ENCODE measurements at regions of chr10 and their contacts with region 1.

Region 1: DNA sequence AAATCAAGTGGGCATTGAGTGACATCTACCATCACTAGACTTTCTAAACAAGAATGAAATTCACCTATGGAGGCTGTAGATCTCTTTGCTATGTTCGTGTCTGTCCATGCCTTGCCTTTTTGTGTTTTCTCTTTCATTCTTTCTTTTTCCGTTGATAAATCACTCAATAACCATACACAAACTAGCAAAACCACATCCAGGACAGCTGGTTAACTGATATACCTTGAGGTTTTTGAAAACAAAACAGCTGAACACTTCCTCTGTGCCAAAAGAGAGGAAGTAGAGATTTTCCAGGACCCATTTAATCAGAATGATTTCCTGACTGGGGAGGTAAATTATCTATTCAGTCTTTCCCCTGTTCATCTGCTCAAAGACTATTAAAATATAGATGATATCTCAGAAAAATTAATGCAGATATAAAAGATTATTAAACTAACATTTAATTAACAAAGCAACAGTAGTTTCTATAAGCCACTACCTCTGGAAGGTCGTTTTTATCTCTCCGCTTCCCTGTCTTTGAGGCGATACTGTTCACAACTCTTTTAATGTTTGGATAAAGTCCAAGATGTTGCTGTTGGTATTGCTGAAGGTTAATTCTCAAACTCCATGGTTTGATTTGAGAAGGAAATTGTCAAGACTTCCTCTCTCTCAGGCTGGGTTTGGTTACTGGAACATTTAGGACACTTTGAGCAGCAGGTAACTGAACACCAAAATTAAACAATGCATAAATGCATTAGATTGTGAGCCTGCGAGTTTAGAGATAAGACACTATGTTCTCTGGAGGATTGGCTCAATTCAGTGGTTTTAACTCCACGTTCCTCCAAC is 24.4 kb upstream of the C10orf67 start:
- DNase-seq: peak; percentile 68
- ATAC-seq: peak; percentile 73
- H3K4me3 ChIP-seq: peak overlapping the region; percentile 26; the same call in 1 of the 2 replicates
- H3K27ac ChIP-seq: no peak overlapping the region
- H3K4me1 ChIP-seq: peaks cover 23% of the 10 kb centered on the region
- H3K27me3 ChIP-seq: no peaks in the 10 kb centered on the region
- CTCF ChIP-seq: no peak
- EP300 ChIP-seq: peak; percentile 48 to 53; a peak in 2 of 4 replicates
- POLR2A ChIP-seq: no peak
- RAD21 ChIP-seq: no peak

Region 2: DNA sequence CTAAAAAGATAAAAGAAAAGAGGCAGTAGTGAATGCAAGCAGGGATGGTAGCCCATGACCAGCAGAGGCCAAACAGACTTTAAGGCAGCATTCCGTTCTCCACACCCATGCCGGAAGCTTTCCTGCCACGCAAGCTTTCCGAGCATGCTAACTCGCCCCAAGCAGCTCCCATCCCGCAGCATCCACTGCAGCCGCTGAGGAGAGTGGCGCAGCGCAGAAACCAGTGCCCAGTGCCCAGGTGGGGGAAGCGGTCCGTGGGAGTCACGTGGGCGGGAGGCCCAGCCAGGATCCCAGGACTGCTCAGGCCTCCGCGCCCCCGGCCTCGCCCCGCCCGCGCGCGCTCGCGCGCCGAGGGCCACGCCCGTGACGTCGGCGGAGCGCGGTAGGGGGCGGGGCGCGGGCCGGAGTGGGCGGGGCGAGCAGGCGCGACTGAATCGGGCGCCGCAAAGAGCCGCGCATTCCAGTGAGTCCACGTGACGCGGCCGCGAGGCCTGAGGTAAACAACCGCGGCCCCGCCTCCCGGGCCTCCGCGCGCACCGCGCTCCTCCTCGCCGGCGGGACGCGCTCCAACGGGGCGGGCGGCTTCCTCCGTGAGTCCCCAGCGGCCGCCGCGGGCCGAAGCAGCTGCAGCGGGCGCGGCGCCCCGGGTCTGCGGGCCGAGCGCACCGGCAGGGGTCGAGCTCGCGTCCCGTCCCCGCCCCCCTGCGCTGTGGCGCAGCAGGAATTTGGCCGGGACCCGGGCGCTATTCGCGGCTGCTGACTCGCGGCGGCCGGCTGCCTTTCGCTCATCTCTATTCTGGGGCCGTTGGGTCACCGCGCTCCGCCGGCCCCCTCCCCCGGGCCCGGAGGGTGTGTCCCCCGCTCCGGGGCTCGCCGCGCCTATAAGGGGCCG is 69.8 kb after region 1 on chr10 and contains the start of gene OTUD1:
- CTCF ChIA-PET with region 1: interaction called, 3 read pairs
- POLR2A ChIA-PET with region 1: no interaction called
- RAD21 ChIA-PET with region 1: no interaction called
- SMC1A ChIA-PET with region 1: no interaction called
- in situ Hi-C with region 1: no loop called
- intact Hi-C with region 1: loop called (anchors 1 kb)
- DNase-seq: peak; percentile 28
- ATAC-seq: peak; percentile 92
- H3K4me3 ChIP-seq: peak within 1 kb of the TSS; percentile 73
- H3K27ac ChIP-seq: no peak within 1 kb of the TSS; the same call in 1 of the 2 replicates
- H3K4me1 ChIP-seq: peaks cover 4% of the 10 kb centered on the region
- H3K27me3 ChIP-seq: peaks cover 3 to 5% of the 10 kb centered on the region in 2 experiments; a peak in 2 of 4 replicates
- CTCF ChIP-seq: no peak
- EP300 ChIP-seq: no peak
- POLR2A ChIP-seq: peak; percentile 76
- RAD21 ChIP-seq: no peak
- polyA plus RNA-seq, gene OTUD1: 0.42 to 0.64 TPM